ENCODE measurements at regions of chr1 and their contacts with region 1.

Region 1: GRCh38 chr1:24502709-24503058 is at the start of gene RCAN3:
- DNase-seq: peak; percentile 65 to 91
- H3K4me3 ChIP-seq: peak within 1 kb of the TSS; percentile 74
- H3K27ac ChIP-seq: no peak within 1 kb of the TSS
- H3K4me1 ChIP-seq: peaks cover 6% of the 10 kb centered on the region; the same call in 1 of the 2 replicates
- H3K27me3 ChIP-seq: no peaks in the 10 kb centered on the region
- CTCF ChIP-seq: no peak
- total RNA-seq, gene RCAN3: 21.9 and 27.4 TPM in 2 replicates

Region 2: DNA sequence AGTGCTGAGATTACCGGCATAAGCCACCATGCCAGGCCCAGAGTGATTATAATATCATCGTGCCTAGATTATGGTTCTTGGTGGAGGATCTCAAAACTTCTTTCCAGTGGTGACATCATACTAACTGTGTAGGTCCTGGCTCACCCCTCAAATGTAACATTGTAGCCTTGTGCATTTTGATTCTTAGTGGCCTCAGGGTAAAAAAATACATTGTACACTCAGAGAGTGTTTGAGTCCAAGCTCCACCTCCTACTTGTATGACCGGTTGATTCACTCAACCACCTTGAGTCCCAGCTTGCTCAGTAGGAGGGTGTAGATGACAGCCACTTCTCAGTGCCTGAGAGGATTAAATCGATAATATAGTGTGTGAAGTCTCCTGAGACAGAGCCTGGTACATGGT is 91.5 kb after region 1 on chr1:
- CTCF ChIA-PET with region 1: no interaction called
- POLR2A ChIA-PET with region 1: no interaction called
- intact Hi-C with region 1: loop called (anchors 5 kb)
- DNase-seq: peak; percentile 34 to 72
- H3K4me3 ChIP-seq: no peak overlapping the region
- H3K27ac ChIP-seq: no peak overlapping the region
- H3K4me1 ChIP-seq: 0 out of 2 replicates have a peak, but pooled peaks cover 6% of the 10 kb centered on the region
- H3K27me3 ChIP-seq: no peaks in the 10 kb centered on the region
- CTCF ChIP-seq: no peak

Measured in PC-9 (cell line).